ENCODE measurements at regions of chr14 and their contacts with region 1.

Region 1: GRCh38 chr14:29805415-29806123 is 122.1 kb downstream of the PRKD1 start:
- DNase-seq: peak; percentile 30 to 78 (median 66)
- ATAC-seq: peak; percentile 71 to 98 (median 85)
- H3K4me3 ChIP-seq: no peak overlapping the region
- H3K27ac ChIP-seq: no peak overlapping the region
- H3K4me1 ChIP-seq: peaks cover 0 to 21% (median 11%) of the 10 kb centered on the region in 12 donors
- H3K27me3 ChIP-seq: no peaks in the 10 kb centered on the region
- CTCF ChIP-seq: no peak
- POLR2A ChIP-seq: no peak

Region 2: DNA sequence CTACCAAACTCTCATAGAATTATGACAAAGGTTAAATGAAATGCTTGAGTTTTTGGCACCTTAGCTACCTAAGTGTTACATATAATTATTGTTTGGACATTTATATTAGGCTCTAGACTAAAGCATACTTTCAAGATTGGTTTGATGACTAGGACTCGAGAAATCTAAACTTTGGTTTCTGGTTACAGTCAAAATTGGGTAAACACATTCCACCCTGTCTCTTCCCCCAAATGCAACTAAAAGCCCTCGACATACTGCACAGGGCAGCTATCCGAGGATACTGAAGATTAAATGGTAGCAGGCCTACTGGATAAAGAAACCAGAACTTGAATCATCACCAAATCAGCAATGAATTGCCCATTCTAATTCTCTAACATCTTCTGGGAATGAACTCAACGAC is 247.1 kb before region 1 on chr14:
- intact Hi-C with region 1: loop called in 1 of 10 experiments (anchors 10 kb)
- DNase-seq: no peak
- ATAC-seq: no peak
- H3K4me3 ChIP-seq: no peak overlapping the region
- H3K27ac ChIP-seq: no peak overlapping the region
- H3K4me1 ChIP-seq: no peaks in the 10 kb centered on the region
- H3K27me3 ChIP-seq: no peaks in the 10 kb centered on the region
- CTCF ChIP-seq: no peak
- POLR2A ChIP-seq: no peak

Region 3: GRCh38 chr14:29741909-29742401 is 63.6 kb before region 1 on chr14:
- intact Hi-C with region 1: no loop called
- DNase-seq: peak in 4 of 5 donors; percentile 30 to 66 (median 41)
- ATAC-seq: peak; percentile 70 to 88 (median 80)
- H3K4me3 ChIP-seq: no peak overlapping the region
- H3K27ac ChIP-seq: peak overlapping the region in 9 of 12 donors; percentile 1 to 57 (median 27)
- H3K4me1 ChIP-seq: peaks cover 4 to 74% (median 34%) of the 10 kb centered on the region in 12 donors
- H3K27me3 ChIP-seq: no peaks in the 10 kb centered on the region
- CTCF ChIP-seq: no peak
- POLR2A ChIP-seq: no peak

Region 4: DNA sequence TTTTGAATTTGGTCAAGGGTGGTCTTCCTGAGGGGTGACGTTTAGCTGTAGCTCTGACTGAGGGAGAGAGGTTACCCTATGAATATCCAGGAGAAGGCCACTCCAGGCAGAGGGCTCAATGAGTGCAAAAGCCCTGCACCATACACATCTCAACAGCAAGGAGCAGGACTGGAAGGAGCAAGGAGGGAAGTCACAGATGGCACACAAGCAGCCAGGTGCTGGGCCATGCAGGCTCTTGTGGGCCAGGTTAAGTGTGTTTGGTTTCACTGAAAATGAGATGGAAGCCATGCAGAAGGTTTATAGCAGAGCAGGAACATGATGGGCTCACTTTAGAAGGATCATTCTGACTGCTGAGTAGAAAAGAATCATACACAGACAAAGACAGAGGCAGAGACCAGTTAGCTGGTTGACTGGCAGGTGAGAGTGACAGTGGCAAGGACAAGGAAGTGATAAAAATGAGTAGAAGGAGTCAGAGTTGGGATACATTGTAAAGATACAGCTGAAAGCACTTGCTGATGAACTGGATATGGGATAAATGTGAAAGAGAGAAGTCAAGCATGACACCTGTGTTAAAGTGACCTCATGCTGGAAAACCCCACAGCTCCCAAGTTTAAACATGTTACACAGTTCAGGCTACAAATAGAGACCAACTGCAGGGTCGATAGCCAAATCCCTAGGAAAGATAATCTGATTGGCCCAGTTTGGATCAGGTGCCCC is 40.9 kb after region 1 on chr14:
- intact Hi-C with region 1: no loop called
- DNase-seq: peak in 1 of 5 donors; percentile 33
- ATAC-seq: no peak
- H3K4me3 ChIP-seq: no peak overlapping the region
- H3K27ac ChIP-seq: no peak overlapping the region
- H3K4me1 ChIP-seq: peaks cover 0 to 3% (median 0%) of the 10 kb centered on the region in 12 donors
- H3K27me3 ChIP-seq: no peaks in the 10 kb centered on the region
- CTCF ChIP-seq: no peak
- POLR2A ChIP-seq: no peak

Region 5: DNA sequence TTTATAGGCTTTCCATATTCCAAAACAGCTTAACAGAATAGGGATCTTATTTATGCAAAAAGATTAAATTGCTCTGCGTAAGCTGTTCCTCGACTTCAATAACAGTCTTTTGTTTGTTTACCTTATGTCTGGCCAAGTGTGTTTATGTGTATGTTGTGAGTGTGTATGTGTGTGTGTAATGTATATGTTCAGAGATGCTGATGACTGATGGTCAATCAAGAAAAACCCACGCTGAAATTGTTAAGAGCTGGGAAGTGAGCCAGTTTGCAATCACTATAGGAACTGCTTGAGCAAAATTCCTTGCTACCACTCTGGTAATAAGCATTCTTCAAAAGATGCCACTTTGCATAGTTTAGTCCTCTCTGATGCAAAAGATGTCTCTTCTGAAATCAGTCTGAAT is 62.4 kb after region 1 on chr14:
- intact Hi-C with region 1: no loop called
- DNase-seq: no peak
- ATAC-seq: no peak
- H3K4me3 ChIP-seq: no peak overlapping the region
- H3K27ac ChIP-seq: no peak overlapping the region
- H3K4me1 ChIP-seq: no peaks in the 10 kb centered on the region
- H3K27me3 ChIP-seq: no peaks in the 10 kb centered on the region
- CTCF ChIP-seq: no peak
- POLR2A ChIP-seq: no peak

Region 6: GRCh38 chr14:29982993-29983392 is 177.4 kb after region 1 on chr14:
- intact Hi-C with region 1: no loop called
- DNase-seq: no peak
- ATAC-seq: no peak
- H3K4me3 ChIP-seq: no peak overlapping the region
- H3K27ac ChIP-seq: no peak overlapping the region
- H3K4me1 ChIP-seq: no peaks in the 10 kb centered on the region
- H3K27me3 ChIP-seq: no peaks in the 10 kb centered on the region
- CTCF ChIP-seq: no peak
- POLR2A ChIP-seq: no peak